Activated CD4-positive, alpha-beta memory T cell treated with anti-CD3 and anti-CD28 coated beads, Interleukin-2, amount 10 ng/mL, durations not matched to agents 7 days and 5 days (primary cell): ENCODE measurements at regions of chr13 and their contacts with region 1.

Region 1: DNA sequence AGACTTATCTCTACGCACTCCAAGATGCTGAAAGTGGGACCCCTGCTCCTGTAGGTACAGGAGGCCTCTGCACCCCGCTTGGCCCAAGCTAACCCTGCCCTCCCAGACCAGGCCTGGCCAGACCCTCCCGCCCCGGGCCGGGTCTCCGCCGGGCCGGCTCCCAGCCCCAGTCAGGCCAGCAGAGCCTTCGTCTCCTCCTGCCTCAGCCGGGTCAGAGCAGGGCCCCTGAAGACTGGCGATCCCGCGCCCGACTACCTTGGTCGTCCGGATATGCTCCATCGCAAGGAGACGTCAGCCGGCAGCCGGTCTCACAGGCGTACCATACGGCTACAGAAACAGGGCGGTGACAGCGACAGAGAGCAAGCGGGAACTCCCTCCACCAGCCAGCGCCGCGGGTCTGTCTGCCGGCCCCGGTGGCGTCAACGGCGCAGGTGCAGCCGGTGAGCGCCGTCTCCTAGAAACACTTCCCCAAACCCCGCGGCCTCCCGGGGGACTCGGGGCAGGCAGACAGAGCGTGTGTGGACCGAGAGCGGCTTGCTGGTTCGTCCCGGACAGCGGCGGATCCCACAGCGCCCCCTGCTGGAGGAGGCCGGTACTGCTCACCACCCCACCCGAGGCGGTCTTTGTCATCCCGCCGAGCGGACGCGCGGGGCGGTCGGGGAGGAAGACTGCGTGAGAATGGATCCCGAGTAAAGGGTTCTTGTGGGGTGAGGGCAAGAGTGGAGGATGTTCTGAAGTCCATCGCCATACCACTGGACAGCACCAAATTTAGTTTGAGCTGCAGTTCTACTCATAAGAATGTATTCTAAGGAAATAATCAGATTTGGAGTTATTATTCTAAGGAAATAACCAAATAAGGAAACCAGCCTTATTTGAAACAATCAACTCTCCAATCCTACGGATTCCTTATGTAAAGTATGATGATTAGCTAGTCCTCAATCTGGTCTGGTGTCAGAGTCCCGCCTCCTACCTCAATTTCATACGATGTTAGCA is at the start of gene MTMR6:
- DNase-seq: peak; percentile 94
- H3K4me3 Mint-ChIP-seq: peak within 1 kb of the TSS; percentile 93
- H3K27ac Mint-ChIP-seq: peak within 1 kb of the TSS; percentile 99
- H3K4me1 Mint-ChIP-seq: peaks cover 49% of the 10 kb centered on the region
- H3K27me3 Mint-ChIP-seq: peaks cover 16% of the 10 kb centered on the region
- total RNA-seq, gene MTMR6: 24.8 to 25.3 TPM

Region 2: DNA sequence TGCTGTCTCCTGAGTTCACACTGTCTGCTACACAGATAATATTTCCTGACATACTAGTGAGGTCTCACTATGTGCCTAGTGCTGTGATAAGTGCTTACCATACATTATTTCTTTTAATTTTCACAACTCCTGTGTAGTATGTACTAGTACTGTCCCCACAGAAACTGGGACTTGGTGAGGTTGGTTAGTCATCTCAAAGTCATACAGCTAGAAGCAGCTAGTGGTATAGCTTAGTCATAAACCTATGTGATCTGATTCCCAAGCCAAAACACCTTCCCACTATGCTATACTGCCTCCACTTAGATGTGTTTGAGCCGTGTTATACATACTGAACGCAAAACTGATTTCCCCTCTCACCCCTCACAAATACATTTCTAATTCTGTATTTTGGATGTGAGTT is 10.5 kb before region 1 on chr13:
- CTCF ChIA-PET with region 1: interaction called, 5 read pairs
- POLR2A ChIA-PET with region 1: interaction called, 11 read pairs
- DNase-seq: no peak
- H3K4me3 Mint-ChIP-seq: no peak overlapping the region
- H3K27ac Mint-ChIP-seq: no peak overlapping the region
- H3K4me1 Mint-ChIP-seq: peaks cover 41% of the 10 kb centered on the region
- H3K27me3 Mint-ChIP-seq: no peaks in the 10 kb centered on the region

Region 3: DNA sequence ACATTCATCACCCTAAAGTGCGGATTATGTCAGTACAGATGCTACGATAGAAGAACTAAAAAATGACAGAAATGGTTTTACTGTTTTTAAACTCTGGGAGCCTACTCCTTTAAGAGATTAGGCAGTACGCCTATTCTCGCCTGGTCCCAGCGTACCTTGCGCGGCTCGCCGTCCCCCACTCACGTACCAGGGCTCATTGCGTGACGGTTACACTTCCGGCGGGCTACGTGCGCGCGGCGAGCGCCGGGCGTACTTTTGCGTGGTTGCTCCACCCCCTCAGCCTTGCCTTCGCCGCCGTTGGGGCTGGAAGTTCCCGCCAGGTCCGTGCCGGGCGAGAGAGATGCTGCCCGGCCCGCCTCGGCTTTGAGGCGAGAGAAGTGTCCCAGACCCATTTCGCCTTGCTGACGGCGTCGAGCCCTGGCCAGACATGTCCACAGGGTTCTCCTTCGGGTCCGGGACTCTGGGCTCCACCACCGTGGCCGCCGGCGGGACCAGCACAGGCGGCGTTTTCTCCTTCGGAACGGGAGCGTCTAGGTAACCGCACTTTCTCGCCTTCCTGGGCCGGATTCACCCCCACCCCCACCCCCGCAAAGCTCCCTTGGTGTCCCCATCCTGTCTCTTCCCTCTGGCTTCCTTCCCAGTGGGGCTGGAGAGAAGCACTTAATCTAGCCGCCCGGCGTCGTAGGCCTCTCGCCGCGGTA is 14.2 kb after region 1 on chr13 and contains the start of gene NUP58:
- CTCF ChIA-PET with region 1: interaction called, 17 read pairs
- POLR2A ChIA-PET with region 1: interaction called, 149 read pairs
- DNase-seq: peak; percentile 96
- H3K4me3 Mint-ChIP-seq: peak within 1 kb of the TSS; percentile 95
- H3K27ac Mint-ChIP-seq: peak within 1 kb of the TSS; percentile 92
- H3K4me1 Mint-ChIP-seq: peaks cover 43% of the 10 kb centered on the region
- H3K27me3 Mint-ChIP-seq: peaks cover 11% of the 10 kb centered on the region
- total RNA-seq, gene NUP58: 80.6 to 86.7 TPM